GM18951 (cell line): ENCODE measurements at regions of chr6 and their contacts with region 1.

Region 1: DNA sequence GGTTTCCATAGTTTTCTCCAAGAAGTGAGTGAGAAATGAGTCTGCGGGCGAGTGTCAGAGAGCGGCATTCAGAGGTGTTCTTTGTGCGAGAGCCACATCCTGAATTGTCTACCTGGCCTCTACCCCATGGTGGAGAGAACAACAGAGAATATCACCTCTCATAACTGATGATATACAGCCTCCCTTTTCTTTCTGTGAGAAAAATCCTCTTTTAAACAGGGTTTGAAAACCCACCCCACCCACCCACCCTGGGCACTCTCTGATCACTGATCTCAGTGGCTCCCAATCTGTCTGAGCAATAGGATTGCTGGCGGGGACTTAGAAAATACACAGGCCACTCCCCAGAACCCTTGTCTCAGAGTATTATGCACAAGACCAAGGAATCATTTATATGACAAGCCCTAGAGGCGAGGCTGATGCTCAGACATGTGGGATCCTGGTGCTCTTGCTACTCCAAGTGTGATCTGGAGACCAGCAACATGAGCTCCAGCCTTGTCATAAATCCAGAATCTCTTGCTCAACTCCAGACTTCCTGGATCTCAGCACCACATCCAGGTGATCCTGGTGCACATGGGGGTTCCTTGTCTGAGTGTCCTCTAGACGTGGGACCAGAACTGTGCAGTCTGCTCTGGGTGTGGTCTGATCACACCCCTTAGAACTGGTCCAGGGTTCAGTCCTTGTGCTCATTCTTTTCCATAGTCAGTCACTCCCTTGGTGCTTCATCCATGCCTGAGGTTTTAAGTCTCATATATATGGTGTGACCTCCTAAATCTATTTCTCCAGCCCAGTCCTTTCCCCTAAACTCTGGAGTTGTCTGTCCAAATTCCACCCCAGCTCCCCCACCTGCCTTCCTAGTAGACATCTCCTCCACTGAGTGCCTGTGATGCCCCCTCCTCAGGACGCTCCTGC is 5.3 kb downstream of the HLA-B start:
- POLR2A ChIP-seq: no peak

Region 2: GRCh38 chr6:31114970-31115849 is 236.4 kb before region 1 on chr6:
- in situ Hi-C with region 1: no loop called
- POLR2A ChIP-seq: no peak

Region 3: DNA sequence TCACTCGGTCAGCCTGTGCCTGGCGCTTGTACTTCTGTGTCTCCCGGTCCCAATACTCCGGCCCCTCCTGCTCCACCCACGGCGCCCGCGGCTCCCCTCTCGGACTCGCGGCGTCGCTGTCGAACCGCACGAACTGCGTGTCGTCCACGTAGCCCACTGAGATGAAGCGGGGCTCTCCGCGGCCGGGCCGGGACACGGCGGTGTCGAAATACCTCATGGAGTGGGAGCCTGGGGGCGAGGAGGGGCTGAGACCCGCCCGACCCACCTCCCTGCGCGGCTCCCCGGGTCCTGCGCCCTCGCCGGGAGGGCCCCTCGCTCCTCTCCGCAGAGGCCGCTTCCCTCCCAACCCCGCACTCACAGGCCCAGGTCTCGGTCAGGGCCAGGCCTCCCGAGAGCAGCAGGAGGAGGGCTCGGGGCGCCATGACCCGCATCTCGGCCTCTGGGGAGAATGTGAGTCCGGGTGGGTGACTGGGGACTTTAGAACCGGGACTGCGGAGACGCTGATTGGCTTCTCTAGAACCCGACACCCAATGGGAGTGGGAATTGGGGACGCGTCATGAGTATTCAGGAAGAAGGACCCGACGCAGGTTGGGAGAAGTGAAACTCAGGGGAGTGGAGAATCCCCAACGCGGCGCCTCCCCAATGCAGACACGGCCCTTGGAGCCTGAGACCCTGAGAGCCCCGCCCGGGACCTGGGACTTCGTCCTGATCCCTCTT is 79.9 kb before region 1 on chr6 and contains the start of gene HLA-C:
- in situ Hi-C with region 1: loop called (anchors 5 kb)
- POLR2A ChIP-seq: peak; percentile 72